Right ventricle myocardium superior (tissue), 1 donor: ENCODE measurements at regions of chr3 and their contacts with region 1.

Region 1: GRCh38 chr3:19543212-19543841 is 390.7 kb downstream of the EFHB start:
- DNase-seq: no peak
- ATAC-seq: no peak

Region 2: DNA sequence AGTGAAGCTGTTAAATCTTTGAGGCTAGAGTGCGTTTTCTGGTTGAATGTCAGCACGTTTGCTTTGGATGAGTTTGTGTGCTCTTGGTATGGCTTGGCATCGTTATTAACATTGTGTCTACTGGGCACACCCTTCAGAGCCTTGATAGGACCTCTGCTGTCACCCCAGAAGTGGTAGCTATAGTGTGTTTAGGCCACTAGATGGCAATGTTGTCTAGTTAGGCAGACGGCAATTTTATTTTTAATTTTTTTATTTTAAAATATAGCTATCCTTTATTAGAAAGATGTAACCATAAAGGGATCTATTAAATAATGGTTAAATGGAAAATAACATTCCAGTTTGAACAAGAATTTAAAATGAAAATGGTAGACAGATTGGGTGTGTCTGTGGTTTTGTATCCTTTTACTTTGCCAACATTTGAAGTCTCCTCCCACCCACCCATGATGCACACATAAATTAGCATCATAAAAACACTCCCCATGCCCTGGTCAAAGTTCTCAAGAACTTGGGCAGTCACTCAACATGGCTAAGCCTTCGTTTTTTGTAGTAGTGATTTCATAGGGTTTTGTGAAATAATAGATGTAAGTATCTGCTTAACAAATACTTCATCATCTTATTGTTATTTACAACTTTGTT is 194.3 kb before region 1 on chr3:
- intact Hi-C with region 1: loop called (anchors 10 kb)
- DNase-seq: no peak
- ATAC-seq: no peak

Region 3: GRCh38 chr3:19702416-19703078 is 159.2 kb after region 1 on chr3:
- intact Hi-C with region 1: no loop called
- DNase-seq: no peak
- ATAC-seq: no peak